GM12878 (cell line): ENCODE measurements at regions of chr3 and their contacts with region 1.

Region 1: GRCh38 chr3:72930754-72931153 is 42.9 kb downstream of the GXYLT2 start:
- DNase-seq: no peak
- ATAC-seq: no peak
- H3K4me3 ChIP-seq: no peak overlapping the region
- H3K27ac ChIP-seq: no peak overlapping the region
- H3K4me1 ChIP-seq: no peaks in the 10 kb centered on the region
- H3K27me3 ChIP-seq: no peaks in the 10 kb centered on the region
- CTCF ChIP-seq: no peak
- EP300 ChIP-seq: no peak
- POLR2A ChIP-seq: no peak
- RAD21 ChIP-seq: no peak

Region 2: DNA sequence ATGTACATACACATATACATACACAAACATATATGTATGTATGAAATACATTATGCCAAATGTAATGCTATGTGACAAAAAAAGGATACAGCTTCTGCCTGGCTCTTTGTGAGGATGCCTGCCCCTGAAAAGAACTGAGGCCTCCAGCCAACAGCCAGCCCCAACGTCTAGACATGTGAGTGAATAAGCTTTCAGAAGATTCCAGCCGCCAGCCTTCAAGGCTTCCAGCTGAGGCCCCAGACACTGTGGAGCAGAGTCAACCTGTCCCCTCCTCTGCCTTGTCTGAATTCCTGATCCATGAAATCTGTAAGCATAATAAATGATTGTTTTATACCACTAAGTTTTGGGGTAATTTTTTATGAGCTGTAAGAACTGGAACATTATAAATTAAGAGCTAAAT is 18.2 kb before region 1 on chr3:
- CTCF ChIA-PET with region 1: interaction called, 3 read pairs
- POLR2A ChIA-PET with region 1: no interaction called
- RAD21 ChIA-PET with region 1: no interaction called
- SMC1A ChIA-PET with region 1: interaction called, 3 read pairs
- in situ Hi-C with region 1: no loop called
- intact Hi-C with region 1: loop called (anchors 1 kb)
- DNase-seq: no peak
- ATAC-seq: no peak
- H3K4me3 ChIP-seq: no peak overlapping the region
- H3K27ac ChIP-seq: no peak overlapping the region
- H3K4me1 ChIP-seq: no peaks in the 10 kb centered on the region
- H3K27me3 ChIP-seq: no peaks in the 10 kb centered on the region; a peak in 2 of 4 replicates
- CTCF ChIP-seq: no peak
- EP300 ChIP-seq: no peak
- POLR2A ChIP-seq: no peak
- RAD21 ChIP-seq: no peak

Region 3: GRCh38 chr3:72960812-72961518 is 30.2 kb after region 1 on chr3:
- CTCF ChIA-PET with region 1: no interaction called
- POLR2A ChIA-PET with region 1: no interaction called
- RAD21 ChIA-PET with region 1: no interaction called
- SMC1A ChIA-PET with region 1: no interaction called
- in situ Hi-C with region 1: no loop called
- intact Hi-C with region 1: no loop called
- DNase-seq: no peak
- ATAC-seq: peak; percentile 18; the same call in 2 of the 3 replicates
- H3K4me3 ChIP-seq: no peak overlapping the region
- H3K27ac ChIP-seq: no peak overlapping the region
- H3K4me1 ChIP-seq: peaks cover 5% of the 10 kb centered on the region
- H3K27me3 ChIP-seq: no peaks in the 10 kb centered on the region
- CTCF ChIP-seq: no peak
- EP300 ChIP-seq: no peak
- POLR2A ChIP-seq: no peak
- RAD21 ChIP-seq: no peak

Region 4: DNA sequence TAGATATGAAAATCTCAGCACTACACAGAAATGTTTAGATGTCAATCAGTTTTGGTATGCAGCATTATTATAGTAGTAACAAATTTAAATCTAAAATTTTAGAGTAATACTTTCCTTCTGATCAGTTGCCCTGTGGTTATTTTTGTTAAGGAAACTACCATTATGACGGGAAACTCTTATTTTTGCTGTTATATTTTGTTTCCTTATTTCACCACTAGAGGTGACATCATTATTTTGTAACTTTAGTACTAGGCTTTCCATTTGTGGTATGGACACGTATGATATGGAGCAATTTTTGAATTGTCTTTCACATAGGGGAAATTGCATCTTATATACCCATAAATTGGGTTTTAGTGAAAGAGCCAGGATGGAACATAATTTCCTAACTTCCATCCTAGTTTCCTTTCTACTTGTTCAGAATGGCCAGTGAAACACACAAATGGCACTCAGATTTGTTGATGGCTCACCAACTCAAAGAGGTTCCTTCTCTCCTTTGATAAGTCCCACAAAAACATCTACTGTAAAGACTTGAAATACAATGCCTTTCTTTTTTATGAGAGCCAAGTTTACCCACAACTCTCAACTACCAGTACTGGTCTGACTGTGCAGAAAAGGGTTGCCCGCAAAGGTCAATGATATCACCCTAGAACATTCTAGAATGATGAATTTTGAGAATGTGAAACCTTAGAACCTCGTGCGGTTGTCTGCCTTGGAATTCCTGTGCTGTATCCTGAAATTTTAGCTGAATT is 46.5 kb after region 1 on chr3:
- CTCF ChIA-PET with region 1: no interaction called
- POLR2A ChIA-PET with region 1: no interaction called
- RAD21 ChIA-PET with region 1: no interaction called
- SMC1A ChIA-PET with region 1: no interaction called
- in situ Hi-C with region 1: no loop called
- intact Hi-C with region 1: no loop called
- DNase-seq: no peak
- ATAC-seq: peak; percentile 92
- H3K4me3 ChIP-seq: no peak overlapping the region
- H3K27ac ChIP-seq: no peak overlapping the region
- H3K4me1 ChIP-seq: peaks cover 25% of the 10 kb centered on the region
- H3K27me3 ChIP-seq: no peaks in the 10 kb centered on the region
- CTCF ChIP-seq: peak in 2 of 3 experiments; percentile 6 to 17; a peak in 2 of 6 replicates
- EP300 ChIP-seq: peak in 1 of 2 experiments; percentile 66; a peak in 1 of 4 replicates
- POLR2A ChIP-seq: no peak
- RAD21 ChIP-seq: no peak